ENCODE measurements at regions of chr7 and their contacts with region 1.

Region 1: DNA sequence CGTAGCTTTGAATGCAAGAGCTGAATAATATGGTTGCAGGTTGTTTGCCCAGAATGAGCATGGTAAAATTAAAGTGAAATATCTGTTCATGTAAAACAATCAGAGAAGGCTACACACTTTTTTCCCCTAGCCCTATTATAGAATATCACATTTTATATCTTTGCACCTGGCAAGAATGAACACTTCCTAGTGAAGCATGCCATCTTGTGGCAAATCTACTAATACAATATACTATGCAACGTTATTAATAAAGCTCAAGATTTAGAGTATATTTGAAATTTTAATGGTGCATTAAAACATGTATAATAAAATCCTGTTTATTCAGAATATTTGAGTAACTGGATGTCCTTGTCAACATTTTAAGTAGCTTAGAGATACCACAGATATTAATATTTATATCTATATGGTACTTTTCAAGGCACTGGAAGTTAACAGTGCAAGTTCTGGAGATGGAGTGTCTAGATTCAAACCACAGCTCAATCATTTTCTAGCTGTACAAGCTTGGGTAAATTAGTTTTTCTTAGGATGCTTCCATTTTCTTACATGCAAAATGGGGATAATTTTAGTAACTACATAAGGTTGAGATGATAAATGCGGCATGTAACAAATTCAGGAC is 643.1 kb upstream of the SEMA3D start:
- DNase-seq: no peak

Region 2: DNA sequence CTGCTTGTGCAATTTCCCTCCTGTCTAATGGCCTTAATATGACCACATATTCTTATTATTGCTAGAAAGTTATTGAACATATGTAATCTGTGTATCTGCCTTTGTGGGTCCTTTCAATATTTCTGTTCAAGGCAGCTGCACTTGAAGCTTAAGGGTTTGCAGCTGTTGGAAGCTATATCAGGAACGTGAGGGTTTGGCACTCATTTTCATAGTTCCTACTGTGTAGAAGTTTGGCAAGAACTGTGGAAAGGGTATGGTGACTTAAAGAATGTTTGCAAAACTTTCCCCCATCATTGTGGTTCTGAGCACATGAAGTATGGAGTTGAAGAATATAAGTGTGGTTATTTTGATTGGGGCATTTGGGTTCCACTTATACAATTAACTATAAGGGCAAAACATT is 1490.6 kb before region 1 on chr7:
- intact Hi-C with region 1: no loop called
- DNase-seq: no peak

Region 3: DNA sequence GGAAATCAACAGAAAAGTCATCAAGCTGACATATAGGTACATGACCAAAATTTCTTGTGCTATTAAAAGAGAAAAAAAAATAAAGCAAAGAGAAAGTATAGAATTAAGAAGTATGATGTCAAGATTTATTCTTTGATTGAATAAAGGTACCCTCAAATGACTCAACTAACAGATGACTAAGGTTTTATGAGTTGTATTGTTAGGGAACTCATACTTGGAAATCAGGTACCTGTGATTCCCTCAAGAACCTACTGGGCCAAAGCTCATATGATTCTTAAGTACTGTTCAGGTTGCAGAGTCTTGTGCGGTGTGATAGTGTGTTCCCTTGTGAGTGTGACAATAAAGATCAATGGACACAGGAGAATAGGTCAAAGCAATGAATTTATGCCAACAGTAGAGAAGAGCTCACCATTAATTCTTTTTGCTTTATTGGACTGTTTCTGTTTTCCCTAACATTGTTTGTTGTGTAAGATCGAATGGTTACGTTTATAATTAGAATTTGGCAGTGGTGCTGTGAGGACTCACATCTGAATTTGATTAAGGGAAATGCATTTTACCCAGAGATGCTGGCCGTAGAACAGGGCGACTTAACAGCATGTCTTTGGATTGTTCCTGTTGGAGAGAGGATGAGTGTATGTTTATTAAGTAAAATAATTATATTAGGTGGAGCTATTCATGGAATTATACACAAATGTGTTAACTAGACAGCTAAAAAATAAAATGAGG is 349.8 kb before region 1 on chr7:
- intact Hi-C with region 1: loop called in 1 of 2 experiments (anchors 5 kb)
- DNase-seq: no peak